RWPE1 (cell line): ENCODE measurements at regions of chr22 and their contacts with region 1.

Region 1: GRCh38 chr22:38698407-38699094 is 2.2 kb downstream of the JOSD1 start:
- DNase-seq: no peak
- H3K27ac ChIP-seq: peak overlapping the region; percentile 65
- CTCF ChIP-seq: no peak

Region 2: GRCh38 chr22:38452373-38453065 is 246.0 kb before region 1 on chr22:
- CTCF ChIA-PET with region 1: no interaction called
- POLR2A ChIA-PET with region 1: interaction called, 11 read pairs
- DNase-seq: no peak
- H3K27ac ChIP-seq: no peak overlapping the region
- CTCF ChIP-seq: no peak